ENCODE measurements at regions of chr11 and their contacts with region 1.

Region 1: GRCh38 chr11:120801801-120802689 is 221.9 kb upstream of the TBCEL start:
- DNase-seq: peak in 7 of 9 experiments; percentile 8 to 58 (median 53)
- ATAC-seq: no peak
- H3K4me3 ChIP-seq: no peak overlapping the region
- H3K4me3 Mint-ChIP-seq: no peak overlapping the region
- H3K27ac ChIP-seq: no peak overlapping the region
- H3K27ac Mint-ChIP-seq: no peak overlapping the region
- H3K4me1 ChIP-seq: no peaks in the 10 kb centered on the region
- H3K4me1 Mint-ChIP-seq: no peaks in the 10 kb centered on the region
- H3K27me3 ChIP-seq: no peaks in the 10 kb centered on the region
- H3K27me3 Mint-ChIP-seq: peaks cover 17% of the 10 kb centered on the region
- CTCF ChIP-seq: peak; percentile 78

Region 2: DNA sequence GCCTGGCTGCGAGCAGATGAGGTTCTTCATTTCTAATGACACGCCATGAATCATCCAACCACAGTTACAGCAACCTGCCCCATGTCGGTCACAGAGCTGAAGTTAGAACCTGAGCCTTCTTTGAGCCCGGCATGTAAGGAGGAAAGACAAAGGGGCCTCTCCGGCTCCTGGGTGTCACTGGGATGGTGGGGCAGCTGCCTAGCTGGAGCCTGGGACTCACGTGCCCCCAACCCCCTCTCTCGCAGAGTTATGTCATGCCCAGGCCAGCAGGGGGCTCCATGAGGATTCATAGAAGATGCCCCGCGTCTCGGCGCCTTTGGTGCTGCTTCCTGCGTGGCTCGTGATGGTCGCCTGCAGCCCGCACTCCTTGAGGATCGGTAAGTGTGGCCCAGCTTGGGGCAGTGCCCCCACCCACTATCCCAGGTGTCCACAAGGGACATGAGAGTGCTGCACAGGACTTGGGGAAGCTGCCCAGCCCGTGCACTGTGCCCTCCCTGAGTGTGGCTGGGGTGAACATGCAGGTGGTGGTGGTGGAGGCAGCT is 141.9 kb before region 1 on chr11:
- CTCF ChIA-PET with region 1: no interaction called
- POLR2A ChIA-PET with region 1: no interaction called
- intact Hi-C with region 1: no loop called
- DNase-seq: peak in 5 of 9 experiments; percentile 1 to 53 (median 20)
- ATAC-seq: no peak
- H3K4me3 ChIP-seq: no peak overlapping the region
- H3K4me3 Mint-ChIP-seq: no peak overlapping the region
- H3K27ac ChIP-seq: no peak overlapping the region
- H3K27ac Mint-ChIP-seq: no peak overlapping the region
- H3K4me1 ChIP-seq: no peaks in the 10 kb centered on the region
- H3K4me1 Mint-ChIP-seq: no peaks in the 10 kb centered on the region
- H3K27me3 ChIP-seq: no peaks in the 10 kb centered on the region
- H3K27me3 Mint-ChIP-seq: peaks cover 12% of the 10 kb centered on the region
- CTCF ChIP-seq: no peak

Region 3: DNA sequence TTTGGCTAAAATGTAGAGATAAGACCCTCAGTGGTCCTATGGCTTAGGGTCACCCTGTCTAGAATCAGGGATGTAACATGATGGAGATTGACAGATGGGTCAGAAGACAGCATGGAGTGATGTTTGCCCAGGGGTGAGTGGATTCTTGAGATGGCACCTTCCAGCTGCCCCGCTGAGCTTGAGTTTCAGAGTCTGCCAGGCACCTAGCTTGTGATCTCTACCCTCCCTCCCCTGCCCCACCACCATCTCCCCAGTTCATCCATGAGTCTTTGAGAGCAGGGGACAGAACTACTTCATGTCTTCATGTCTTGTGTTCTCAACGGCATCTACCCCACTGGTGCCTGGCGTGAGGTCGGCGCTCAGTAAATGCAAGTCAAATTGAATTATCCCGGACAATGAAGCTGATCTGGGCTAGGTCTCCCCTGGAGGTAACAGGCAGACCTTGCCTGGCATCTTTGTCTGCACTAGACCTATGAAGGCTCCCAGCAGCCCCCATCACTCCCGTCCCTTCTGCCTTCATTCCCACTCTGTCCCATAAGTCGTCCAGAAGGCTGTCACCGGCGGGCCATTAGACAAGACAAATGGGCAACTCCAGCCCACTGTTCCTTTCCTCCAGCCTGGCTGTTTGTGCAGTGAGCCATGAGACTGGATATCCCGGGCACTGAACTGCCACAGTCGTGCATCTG is 17.3 kb before region 1 on chr11:
- CTCF ChIA-PET with region 1: interaction called, 13 read pairs
- POLR2A ChIA-PET with region 1: no interaction called
- intact Hi-C with region 1: no loop called
- DNase-seq: peak in 1 of 9 experiments; percentile 34
- ATAC-seq: no peak
- H3K4me3 ChIP-seq: no peak overlapping the region
- H3K4me3 Mint-ChIP-seq: no peak overlapping the region
- H3K27ac ChIP-seq: no peak overlapping the region
- H3K27ac Mint-ChIP-seq: no peak overlapping the region
- H3K4me1 ChIP-seq: no peaks in the 10 kb centered on the region
- H3K4me1 Mint-ChIP-seq: no peaks in the 10 kb centered on the region
- H3K27me3 ChIP-seq: no peaks in the 10 kb centered on the region
- H3K27me3 Mint-ChIP-seq: peaks cover 5% of the 10 kb centered on the region
- CTCF ChIP-seq: no peak

Region 4: DNA sequence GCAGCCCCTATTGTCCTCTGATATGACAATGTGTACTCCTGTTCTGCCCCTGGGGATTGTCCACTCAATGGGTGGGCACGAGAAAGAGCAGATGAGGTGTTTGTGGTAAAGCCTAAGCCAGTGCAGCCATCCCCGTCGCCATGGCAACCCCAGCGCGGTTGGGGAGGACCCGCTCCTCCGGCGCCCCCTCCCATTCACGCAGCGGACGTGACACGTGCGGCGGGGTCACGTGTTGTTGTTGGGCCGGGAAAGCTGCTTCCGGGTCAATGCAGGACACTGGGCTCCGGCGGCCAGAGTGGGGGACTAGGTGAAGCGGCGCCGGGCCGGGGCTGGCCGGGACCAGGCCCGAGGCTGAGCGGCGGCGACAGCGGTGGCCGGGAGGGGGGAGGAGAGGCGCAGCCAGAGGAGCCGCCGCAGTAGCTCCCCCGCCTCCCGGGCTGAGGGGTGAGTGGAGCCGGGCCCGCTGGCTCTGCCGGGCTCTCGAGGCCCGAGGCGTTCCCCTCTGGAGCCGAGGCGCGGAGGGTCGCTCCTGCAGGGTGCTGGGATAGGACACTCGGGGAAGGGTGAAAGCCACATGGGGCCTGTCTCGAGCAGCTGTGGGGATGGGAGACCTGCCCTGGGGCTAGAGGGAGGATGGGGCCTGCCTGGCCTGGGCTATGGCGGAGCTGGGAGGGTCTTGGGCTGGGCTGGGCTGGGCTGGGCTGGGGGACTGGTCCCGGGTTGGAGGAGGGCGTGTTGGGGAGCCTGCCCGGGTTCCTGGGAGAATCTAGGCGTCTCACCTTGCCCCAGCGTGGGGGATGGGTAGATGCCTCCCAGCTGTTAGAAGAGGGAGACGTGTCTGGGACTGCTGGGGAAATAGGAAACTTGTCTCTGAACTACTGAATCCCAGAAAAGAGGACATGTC is 222.1 kb after region 1 on chr11 and contains the start of gene TBCEL:
- CTCF ChIA-PET with region 1: no interaction called
- POLR2A ChIA-PET with region 1: no interaction called
- intact Hi-C with region 1: no loop called
- DNase-seq: peak; percentile 64 to 88 (median 82)
- ATAC-seq: peak; percentile 76
- H3K4me3 ChIP-seq: peak within 1 kb of the TSS; percentile 56 to 69
- H3K4me3 Mint-ChIP-seq: peak within 1 kb of the TSS; percentile 85
- H3K27ac ChIP-seq: peak within 1 kb of the TSS; percentile 48 to 64
- H3K27ac Mint-ChIP-seq: peak within 1 kb of the TSS; percentile 58
- H3K4me1 ChIP-seq: peaks cover 21% of the 10 kb centered on the region
- H3K4me1 Mint-ChIP-seq: peaks cover 36% of the 10 kb centered on the region
- H3K27me3 ChIP-seq: no peaks in the 10 kb centered on the region
- H3K27me3 Mint-ChIP-seq: peaks cover 3% of the 10 kb centered on the region
- CTCF ChIP-seq: no peak
- total RNA-seq, gene TBCEL: 14.6 to 17.1 TPM